ENCODE measurements at regions of chr5 and their contacts with region 1.

Region 1: DNA sequence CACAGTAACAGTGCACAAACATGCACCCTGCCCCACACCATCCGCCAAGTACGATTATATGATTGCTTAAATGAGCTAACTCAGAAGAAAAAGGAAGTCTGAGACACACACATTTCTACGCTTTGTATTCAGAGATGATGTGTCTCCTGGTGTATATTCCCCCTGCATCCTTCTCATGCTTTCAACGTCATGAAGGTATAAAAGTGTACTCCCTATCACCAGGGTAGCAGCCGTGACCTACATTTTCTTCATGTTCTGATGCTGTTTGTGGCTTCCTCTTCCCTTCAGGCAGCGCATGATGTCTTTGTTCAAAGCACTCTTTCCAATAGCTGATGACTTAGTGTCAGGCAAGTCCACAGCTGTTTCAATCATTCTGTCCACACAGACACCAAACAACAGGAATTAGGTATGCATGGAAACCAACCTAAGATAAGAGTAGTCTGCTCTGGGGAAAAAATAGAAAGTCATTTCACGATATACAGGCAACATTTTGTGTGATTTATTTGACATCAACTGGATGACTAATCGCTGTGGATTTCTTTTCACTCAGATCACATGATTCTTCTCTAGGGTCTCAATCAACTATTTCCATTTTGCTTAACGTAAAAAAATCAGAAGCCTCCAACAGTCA is 269.4 kb upstream of the PTGER4 start:
- DNase-seq: peak; percentile 23 to 98 (median 93)
- ATAC-seq: peak; percentile 91
- H3K4me3 ChIP-seq: no peak overlapping the region
- H3K4me3 Mint-ChIP-seq: peak overlapping the region; percentile 49 to 87 (median 80)
- H3K27ac ChIP-seq: peak overlapping the region; percentile 99
- H3K27ac Mint-ChIP-seq: peak overlapping the region; percentile 95 to 100 (median 99)
- H3K4me1 ChIP-seq: peaks cover 54 to 56% of the 10 kb centered on the region in 2 donors
- H3K4me1 Mint-ChIP-seq: peaks cover 38 to 76% (median 65%) of the 10 kb centered on the region in 7 donors
- H3K27me3 ChIP-seq: no peaks in the 10 kb centered on the region
- H3K27me3 Mint-ChIP-seq: no peaks in the 10 kb centered on the region

Region 2: GRCh38 chr5:39970117-39970798 is 440.1 kb before region 1 on chr5:
- CTCF ChIA-PET with region 1: no interaction called
- POLR2A ChIA-PET with region 1: no interaction called
- intact Hi-C with region 1: no loop called
- DNase-seq: no peak
- ATAC-seq: no peak
- H3K4me3 ChIP-seq: no peak overlapping the region
- H3K4me3 Mint-ChIP-seq: no peak overlapping the region
- H3K27ac ChIP-seq: no peak overlapping the region
- H3K27ac Mint-ChIP-seq: no peak overlapping the region
- H3K4me1 ChIP-seq: no peaks in the 10 kb centered on the region
- H3K4me1 Mint-ChIP-seq: no peaks in the 10 kb centered on the region
- H3K27me3 ChIP-seq: no peaks in the 10 kb centered on the region
- H3K27me3 Mint-ChIP-seq: peaks cover 3 to 15% (median 6%) of the 10 kb centered on the region in 5 donors

Region 3: DNA sequence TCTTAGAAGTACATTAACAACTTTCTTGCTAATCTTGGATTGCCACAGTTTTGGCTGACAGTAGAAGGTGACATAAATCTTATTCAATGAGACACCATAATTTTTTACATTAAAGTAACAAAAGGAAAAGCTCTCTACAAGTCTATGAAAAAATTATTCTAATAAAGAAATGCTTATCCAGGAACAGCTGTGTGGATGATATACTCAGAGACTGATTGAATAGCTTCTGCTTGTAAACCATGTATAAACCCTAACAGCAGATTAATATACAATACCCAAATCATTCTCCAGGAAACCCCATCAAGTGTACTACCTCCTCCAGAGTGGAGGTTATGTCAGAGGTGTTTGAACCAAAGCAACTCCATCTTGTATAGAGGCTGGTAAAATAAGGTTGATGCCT is 312.0 kb before region 1 on chr5:
- CTCF ChIA-PET with region 1: no interaction called
- POLR2A ChIA-PET with region 1: no interaction called
- intact Hi-C with region 1: no loop called
- DNase-seq: no peak
- ATAC-seq: no peak
- H3K4me3 ChIP-seq: no peak overlapping the region
- H3K4me3 Mint-ChIP-seq: no peak overlapping the region
- H3K27ac ChIP-seq: no peak overlapping the region
- H3K27ac Mint-ChIP-seq: no peak overlapping the region
- H3K4me1 ChIP-seq: no peaks in the 10 kb centered on the region
- H3K4me1 Mint-ChIP-seq: no peaks in the 10 kb centered on the region
- H3K27me3 ChIP-seq: no peaks in the 10 kb centered on the region
- H3K27me3 Mint-ChIP-seq: peaks cover 0 to 10% (median 0%) of the 10 kb centered on the region in 5 donors

Region 4: GRCh38 chr5:40386289-40386688 is 24.1 kb before region 1 on chr5:
- CTCF ChIA-PET with region 1: no interaction called
- POLR2A ChIA-PET with region 1: interaction called, 33 read pairs
- intact Hi-C with region 1: loop called in 1 of 2 experiments (anchors 1 kb)
- DNase-seq: no peak
- ATAC-seq: peak; percentile 62
- H3K4me3 ChIP-seq: no peak overlapping the region
- H3K4me3 Mint-ChIP-seq: peak overlapping the region in 3 of 10 donors; percentile 38 to 55 (median 48)
- H3K27ac ChIP-seq: peak overlapping the region; percentile 26
- H3K27ac Mint-ChIP-seq: peak overlapping the region in 4 of 9 donors; percentile 26 to 79 (median 54)
- H3K4me1 ChIP-seq: peaks cover 23 to 66% of the 10 kb centered on the region in 2 donors
- H3K4me1 Mint-ChIP-seq: peaks cover 37 to 86% (median 66%) of the 10 kb centered on the region in 7 donors
- H3K27me3 ChIP-seq: no peaks in the 10 kb centered on the region
- H3K27me3 Mint-ChIP-seq: no peaks in the 10 kb centered on the region

Region 5: GRCh38 chr5:40429258-40430101 is 19.1 kb after region 1 on chr5:
- CTCF ChIA-PET with region 1: no interaction called
- POLR2A ChIA-PET with region 1: interaction called, 13 read pairs
- intact Hi-C with region 1: loop called in 1 of 2 experiments (anchors 1 kb)
- DNase-seq: no peak
- ATAC-seq: peak; percentile 78
- H3K4me3 ChIP-seq: no peak overlapping the region
- H3K4me3 Mint-ChIP-seq: peak overlapping the region in 1 of 10 donors; percentile 79
- H3K27ac ChIP-seq: no peak overlapping the region
- H3K27ac Mint-ChIP-seq: peak overlapping the region in 2 of 9 donors; percentile 21 to 91
- H3K4me1 ChIP-seq: peaks cover 0 to 15% of the 10 kb centered on the region in 2 donors
- H3K4me1 Mint-ChIP-seq: peaks cover 5 to 48% (median 19%) of the 10 kb centered on the region in 7 donors
- H3K27me3 ChIP-seq: no peaks in the 10 kb centered on the region
- H3K27me3 Mint-ChIP-seq: no peaks in the 10 kb centered on the region

Region 6: DNA sequence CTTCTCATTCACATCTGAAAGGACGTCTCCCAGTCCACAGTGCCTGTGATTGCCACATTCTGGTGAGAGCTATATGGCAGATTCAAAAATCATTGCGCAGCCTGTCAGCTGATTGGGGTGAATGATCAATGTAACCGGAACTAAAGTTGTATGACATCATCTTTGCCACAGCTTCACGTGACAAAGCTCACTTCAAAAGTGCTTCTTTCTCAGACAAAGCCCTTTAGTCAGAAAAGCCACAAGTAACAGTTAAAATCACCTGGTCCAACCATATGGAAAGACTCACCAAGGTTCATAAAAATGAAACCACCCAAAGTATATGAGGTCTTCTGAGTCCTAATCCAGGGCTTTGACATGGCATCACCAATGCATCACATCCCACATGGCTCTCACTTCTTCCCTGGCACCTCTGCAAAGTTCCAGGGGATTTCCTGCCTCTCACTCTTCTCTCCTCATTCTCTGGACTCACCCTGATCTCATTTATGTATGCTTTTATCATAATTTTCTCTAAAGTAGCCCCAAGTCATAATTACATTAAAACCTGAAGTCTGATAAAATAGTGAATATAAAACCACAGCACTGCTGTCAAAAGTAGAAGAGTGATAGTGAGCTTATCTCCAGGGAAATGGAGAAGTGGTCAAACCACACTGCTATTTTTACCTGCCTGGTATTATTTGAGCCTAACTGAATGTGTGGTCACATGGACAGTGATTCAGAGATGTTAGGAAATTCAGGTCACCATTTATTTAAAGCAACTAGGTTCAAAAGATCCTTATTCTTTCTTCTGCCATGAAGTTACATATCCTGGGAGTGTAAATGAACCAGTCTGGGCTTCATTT is 76.3 kb after region 1 on chr5:
- CTCF ChIA-PET with region 1: no interaction called
- POLR2A ChIA-PET with region 1: no interaction called
- intact Hi-C with region 1: loop called (anchors 1 kb)
- DNase-seq: peak in 8 of 9 donors; percentile 31 to 76 (median 56)
- ATAC-seq: peak; percentile 81
- H3K4me3 ChIP-seq: no peak overlapping the region
- H3K4me3 Mint-ChIP-seq: peak overlapping the region in 4 of 10 donors; percentile 2 to 52 (median 48)
- H3K27ac ChIP-seq: no peak overlapping the region
- H3K27ac Mint-ChIP-seq: peak overlapping the region in 8 of 9 donors; percentile 5 to 87 (median 59)
- H3K4me1 ChIP-seq: peaks cover 6 to 12% of the 10 kb centered on the region in 2 donors
- H3K4me1 Mint-ChIP-seq: peaks cover 6 to 69% (median 30%) of the 10 kb centered on the region in 7 donors
- H3K27me3 ChIP-seq: no peaks in the 10 kb centered on the region
- H3K27me3 Mint-ChIP-seq: no peaks in the 10 kb centered on the region

Region 7: GRCh38 chr5:40615586-40616170 is 205.3 kb after region 1 on chr5:
- CTCF ChIA-PET with region 1: no interaction called
- POLR2A ChIA-PET with region 1: no interaction called
- intact Hi-C with region 1: loop called in 1 of 2 experiments (anchors 1 kb)
- DNase-seq: peak in 6 of 9 donors; percentile 13 to 61 (median 38)
- ATAC-seq: peak; percentile 79
- H3K4me3 ChIP-seq: no peak overlapping the region
- H3K4me3 Mint-ChIP-seq: peak overlapping the region; percentile 18 to 68 (median 50)
- H3K27ac ChIP-seq: peak overlapping the region; percentile 9
- H3K27ac Mint-ChIP-seq: peak overlapping the region in 8 of 9 donors; percentile 44 to 83 (median 76)
- H3K4me1 ChIP-seq: peaks cover 0 to 13% of the 10 kb centered on the region in 2 donors
- H3K4me1 Mint-ChIP-seq: peaks cover 15 to 39% (median 27%) of the 10 kb centered on the region in 7 donors
- H3K27me3 ChIP-seq: no peaks in the 10 kb centered on the region
- H3K27me3 Mint-ChIP-seq: no peaks in the 10 kb centered on the region

Region 8: GRCh38 chr5:40755407-40756365 is 345.3 kb after region 1 on chr5 and contains the start of gene TTC33:
- CTCF ChIA-PET with region 1: interaction called, 3 read pairs
- POLR2A ChIA-PET with region 1: no interaction called
- intact Hi-C with region 1: loop called (anchors 1 to 10 kb)
- DNase-seq: peak; percentile 84 to 95 (median 91)
- ATAC-seq: peak; percentile 95
- H3K4me3 ChIP-seq: peak within 1 kb of the TSS; percentile 95
- H3K4me3 Mint-ChIP-seq: no peak within 1 kb of the TSS
- H3K27ac ChIP-seq: peak within 1 kb of the TSS; percentile 89
- H3K27ac Mint-ChIP-seq: peak within 1 kb of the TSS in 1 of 9 donors; percentile 32
- H3K4me1 ChIP-seq: peaks cover 9 to 11% of the 10 kb centered on the region in 2 donors
- H3K4me1 Mint-ChIP-seq: peaks cover 0 to 34% (median 17%) of the 10 kb centered on the region in 7 donors
- H3K27me3 ChIP-seq: no peaks in the 10 kb centered on the region
- H3K27me3 Mint-ChIP-seq: no peaks in the 10 kb centered on the region
- total RNA-seq, gene TTC33: 7.0 to 17.2 (median 14.0) TPM

Region 9: GRCh38 chr5:40834849-40835787 is 424.8 kb after region 1 on chr5 and contains the start of gene RPL37:
- CTCF ChIA-PET with region 1: no interaction called
- POLR2A ChIA-PET with region 1: interaction called, 6 read pairs
- intact Hi-C with region 1: loop called in 1 of 2 experiments (anchors 1 kb)
- DNase-seq: peak; percentile 73 to 91 (median 88)
- ATAC-seq: peak; percentile 96
- H3K4me3 ChIP-seq: peak within 1 kb of the TSS; percentile 88
- H3K4me3 Mint-ChIP-seq: peak within 1 kb of the TSS; percentile 93 to 99 (median 98)
- H3K27ac ChIP-seq: peak within 1 kb of the TSS; percentile 92
- H3K27ac Mint-ChIP-seq: peak within 1 kb of the TSS; percentile 97 to 100 (median 99)
- H3K4me1 ChIP-seq: peaks cover 11 to 23% of the 10 kb centered on the region in 2 donors
- H3K4me1 Mint-ChIP-seq: peaks cover 21 to 58% (median 45%) of the 10 kb centered on the region in 7 donors
- H3K27me3 ChIP-seq: no peaks in the 10 kb centered on the region
- H3K27me3 Mint-ChIP-seq: no peaks in the 10 kb centered on the region
- total RNA-seq, gene RPL37: 1,642 to 2,808 (median 2,710) TPM

Measured in naive thymus-derived CD4-positive, alpha-beta T cell (primary cell).